Activated CD4-positive, alpha-beta memory T cell treated with anti-CD3 and anti-CD28 coated beads, Interleukin-2, amount 10 ng/mL, durations not matched to agents 7 days and 5 days (primary cell): ENCODE measurements at regions of chr18 and their contacts with region 1.

Region 1: DNA sequence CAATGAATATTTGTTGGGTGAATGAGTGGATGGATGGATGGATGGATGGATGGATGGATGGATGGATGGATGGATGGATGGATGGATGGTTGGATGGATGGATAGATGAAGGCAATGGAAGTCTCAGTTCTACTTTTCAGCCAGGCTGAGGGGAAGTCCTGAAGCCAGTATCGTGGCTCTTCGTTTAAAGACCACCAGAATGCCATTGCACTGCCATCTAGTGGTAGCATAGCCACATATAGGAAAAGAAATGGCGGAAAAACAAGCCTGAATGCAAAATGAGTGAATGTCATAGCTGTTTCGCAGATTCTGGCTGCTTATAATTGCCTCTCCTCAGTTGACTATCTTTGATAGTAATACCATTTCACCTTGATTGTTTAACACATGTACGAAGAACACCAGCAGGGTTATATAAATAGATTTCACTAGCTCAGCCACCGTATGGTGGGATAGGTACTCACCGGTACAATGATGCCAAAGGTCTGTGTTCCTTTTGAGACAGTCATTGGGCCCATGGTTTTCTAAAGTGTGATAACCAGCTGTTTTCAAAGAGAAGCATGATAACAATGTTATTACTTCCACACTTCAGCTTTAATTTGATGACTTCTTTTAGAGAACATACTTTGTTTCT is 62.3 kb upstream of the GREB1L start:
- DNase-seq: peak; percentile 39
- H3K4me3 Mint-ChIP-seq: no peak overlapping the region
- H3K27ac Mint-ChIP-seq: no peak overlapping the region
- H3K4me1 Mint-ChIP-seq: peaks cover 1% of the 10 kb centered on the region
- H3K27me3 Mint-ChIP-seq: peaks cover 2% of the 10 kb centered on the region

Region 2: DNA sequence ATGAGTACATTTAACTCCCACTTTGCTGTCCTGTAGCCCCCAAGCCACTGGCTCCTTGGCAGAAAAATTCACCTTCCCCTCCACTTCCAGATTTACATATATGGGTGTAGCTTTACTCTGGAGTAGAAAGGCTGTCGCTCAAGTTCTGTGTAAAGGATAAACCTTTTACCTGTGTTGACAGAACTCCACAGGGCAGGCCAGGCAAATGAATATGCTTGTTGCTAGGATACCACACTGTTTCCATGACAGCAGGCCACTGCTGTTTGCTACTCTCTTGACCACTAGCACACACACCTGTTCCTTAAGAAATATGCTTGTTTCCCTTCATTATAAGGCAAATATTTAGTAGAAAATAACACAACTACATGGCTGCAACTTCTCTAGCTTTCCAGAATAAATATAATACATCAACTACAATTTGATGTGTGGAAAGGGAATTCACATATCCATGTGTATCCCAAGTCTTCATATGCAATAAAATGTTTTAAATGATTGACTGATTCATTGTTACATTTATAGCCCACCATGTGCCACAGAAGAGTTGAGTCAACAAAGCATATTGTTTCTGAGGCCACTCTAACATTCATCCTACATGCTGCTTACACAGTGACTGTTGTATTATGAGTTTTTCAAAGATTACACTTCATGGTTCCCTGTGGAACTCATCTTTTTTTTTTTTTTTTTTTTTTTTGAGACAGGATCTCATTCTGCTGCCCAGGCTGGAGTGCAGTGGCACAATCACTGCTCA is 11.9 kb before region 1 on chr18:
- CTCF ChIA-PET with region 1: interaction called, 11 read pairs
- POLR2A ChIA-PET with region 1: no interaction called
- DNase-seq: no peak
- H3K4me3 Mint-ChIP-seq: no peak overlapping the region
- H3K27ac Mint-ChIP-seq: no peak overlapping the region
- H3K4me1 Mint-ChIP-seq: no peaks in the 10 kb centered on the region
- H3K27me3 Mint-ChIP-seq: peaks cover 3% of the 10 kb centered on the region

Region 3: GRCh38 chr18:21194871-21195771 is 15.4 kb after region 1 on chr18:
- CTCF ChIA-PET with region 1: interaction called, 19 read pairs
- POLR2A ChIA-PET with region 1: no interaction called
- DNase-seq: no peak
- H3K4me3 Mint-ChIP-seq: no peak overlapping the region
- H3K27ac Mint-ChIP-seq: no peak overlapping the region
- H3K4me1 Mint-ChIP-seq: no peaks in the 10 kb centered on the region
- H3K27me3 Mint-ChIP-seq: peaks cover 22% of the 10 kb centered on the region

Region 4: DNA sequence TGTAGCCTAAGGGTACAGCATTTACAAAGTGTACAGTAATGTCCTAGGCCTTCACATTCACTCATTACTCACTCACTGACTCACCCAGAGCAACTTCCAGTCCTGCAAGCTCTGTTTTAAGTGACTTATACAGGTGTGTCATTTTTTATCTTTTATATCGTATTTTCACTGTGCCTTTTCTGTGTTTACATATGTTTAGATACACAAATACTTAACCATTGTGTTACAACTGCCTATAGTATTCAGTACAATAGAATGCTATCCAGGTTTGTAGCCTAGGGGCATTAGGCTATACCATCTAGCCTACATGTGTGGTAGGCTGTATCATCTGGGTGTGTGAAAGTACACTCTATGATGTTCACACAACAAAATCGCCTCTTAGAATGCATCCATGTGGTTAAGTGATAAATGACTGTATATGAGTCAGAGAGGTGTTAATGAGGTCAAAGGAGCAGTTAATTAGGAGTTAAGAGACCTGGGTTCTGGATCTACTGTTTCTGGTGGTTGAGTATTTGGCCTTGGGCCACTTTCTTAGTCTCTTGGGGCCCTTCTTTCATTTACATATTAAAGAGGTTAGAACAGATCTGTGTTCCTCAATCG is 211.5 kb after region 1 on chr18:
- CTCF ChIA-PET with region 1: no interaction called
- POLR2A ChIA-PET with region 1: no interaction called
- DNase-seq: no peak
- H3K4me3 Mint-ChIP-seq: no peak overlapping the region
- H3K27ac Mint-ChIP-seq: no peak overlapping the region
- H3K4me1 Mint-ChIP-seq: no peaks in the 10 kb centered on the region
- H3K27me3 Mint-ChIP-seq: peaks cover 3% of the 10 kb centered on the region